Ascending aorta (tissue), 2 donors: ENCODE measurements at regions of chr19 and their contacts with region 1.

Region 1: DNA sequence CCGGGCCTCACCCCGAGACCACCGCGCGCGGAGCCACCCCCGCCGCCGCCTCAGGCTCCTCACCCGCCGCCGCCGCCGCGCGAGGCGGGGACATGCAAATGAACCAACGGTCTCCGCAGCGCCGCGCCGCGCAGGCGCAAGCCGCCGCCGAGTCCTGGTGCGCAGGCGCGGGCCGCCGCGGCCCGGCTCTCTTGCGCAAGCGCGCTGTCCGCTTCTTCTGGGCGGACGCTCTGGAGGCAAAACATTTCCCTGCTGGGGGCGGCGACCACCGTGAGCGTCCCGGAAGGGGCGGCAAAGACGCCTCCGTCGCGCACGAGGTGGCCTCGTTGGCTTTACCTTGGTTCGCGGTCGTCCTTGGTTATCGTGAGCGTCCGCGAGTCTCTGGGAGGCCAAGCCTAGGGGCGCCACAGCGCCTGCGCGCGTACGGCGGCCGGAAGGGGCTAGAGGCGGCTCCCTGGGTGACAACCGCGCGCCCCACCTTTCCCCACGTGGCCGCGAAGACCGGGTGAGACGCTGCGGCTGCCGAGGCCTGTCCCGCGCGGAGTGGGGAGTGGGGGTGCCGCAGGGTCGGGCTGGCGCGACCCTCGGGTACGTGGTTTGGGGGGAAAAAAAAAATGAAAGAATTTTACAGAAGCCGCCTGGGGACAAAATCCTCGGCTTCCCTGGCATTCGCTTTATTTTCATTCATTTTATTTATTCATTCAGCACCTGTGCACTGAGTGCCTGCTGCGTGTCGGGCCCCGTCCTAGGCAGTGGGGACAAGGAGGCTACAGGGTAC is at the starts of genes ARMC6 and SUGP2:
- DNase-seq: peak; percentile 46 to 90
- H3K4me3 ChIP-seq: peak within 1 kb of the TSS; percentile 92 to 96
- H3K27ac ChIP-seq: peak within 1 kb of the TSS; percentile 85 to 94
- H3K4me1 ChIP-seq: peaks cover 5 to 14% of the 10 kb centered on the region in 2 donors
- H3K27me3 ChIP-seq: no peaks in the 10 kb centered on the region
- CTCF ChIP-seq: peak; percentile 7 to 49 (median 16)
- total RNA-seq, gene ARMC6: 34.7 TPM
- total RNA-seq, gene SUGP2: 23.6 TPM

Region 2: GRCh38 chr19:18919086-18919899 is 114.3 kb before region 1 on chr19 and contains the starts of genes COPE and DDX49:
- intact Hi-C with region 1: loop called (anchors 5 kb)
- DNase-seq: peak; percentile 98 to 100
- H3K4me3 ChIP-seq: peak within 1 kb of the TSS; percentile 88 to 98
- H3K27ac ChIP-seq: peak within 1 kb of the TSS; percentile 91 to 97
- H3K4me1 ChIP-seq: peaks cover 6 to 22% of the 10 kb centered on the region in 2 donors
- H3K27me3 ChIP-seq: no peaks in the 10 kb centered on the region
- CTCF ChIP-seq: no peak
- total RNA-seq, gene COPE: 331 TPM
- total RNA-seq, gene DDX49: 51.6 TPM

Region 3: DNA sequence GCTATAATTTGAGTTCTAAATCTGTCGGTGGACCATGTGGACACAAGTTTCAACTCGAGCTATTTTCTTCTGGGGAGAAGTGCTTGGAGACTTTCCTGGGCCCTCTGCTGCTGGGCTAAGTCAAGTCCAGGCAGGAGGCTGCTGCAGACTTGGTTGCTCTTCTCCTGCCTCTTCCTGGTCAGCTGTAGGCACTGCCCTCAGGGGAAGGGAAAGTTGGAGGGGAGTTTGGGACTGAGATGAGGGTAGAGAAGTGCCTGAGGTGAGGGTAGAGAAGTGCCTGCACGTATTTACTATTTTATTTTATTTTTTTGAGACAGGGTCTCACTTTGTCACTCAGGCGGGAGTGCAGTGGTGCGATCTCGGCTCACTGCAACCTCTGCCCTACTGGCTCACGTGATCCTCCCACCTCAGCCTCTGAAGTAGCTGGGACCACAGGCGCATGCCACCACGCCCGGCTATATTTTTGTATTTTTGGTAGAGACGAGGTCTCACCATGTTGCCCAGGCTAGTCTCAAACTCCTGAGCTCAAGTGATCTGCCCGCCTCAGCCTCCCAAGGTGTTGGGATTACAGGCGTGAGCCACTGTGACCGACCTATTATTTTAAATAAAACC is 356.0 kb after region 1 on chr19:
- intact Hi-C with region 1: no loop called
- DNase-seq: no peak
- H3K4me3 ChIP-seq: peak overlapping the region in 1 of 2 donors; percentile 14
- H3K27ac ChIP-seq: peak overlapping the region; percentile 83 to 92
- H3K4me1 ChIP-seq: peaks cover 13 to 41% of the 10 kb centered on the region in 2 donors
- H3K27me3 ChIP-seq: no peaks in the 10 kb centered on the region
- CTCF ChIP-seq: no peak